Activated naive CD4-positive, alpha-beta T cell treated with anti-CD3 and anti-CD28 coated beads for 36 hours (primary cell): ENCODE measurements at regions of chr9 and their contacts with region 1.

Region 1: DNA sequence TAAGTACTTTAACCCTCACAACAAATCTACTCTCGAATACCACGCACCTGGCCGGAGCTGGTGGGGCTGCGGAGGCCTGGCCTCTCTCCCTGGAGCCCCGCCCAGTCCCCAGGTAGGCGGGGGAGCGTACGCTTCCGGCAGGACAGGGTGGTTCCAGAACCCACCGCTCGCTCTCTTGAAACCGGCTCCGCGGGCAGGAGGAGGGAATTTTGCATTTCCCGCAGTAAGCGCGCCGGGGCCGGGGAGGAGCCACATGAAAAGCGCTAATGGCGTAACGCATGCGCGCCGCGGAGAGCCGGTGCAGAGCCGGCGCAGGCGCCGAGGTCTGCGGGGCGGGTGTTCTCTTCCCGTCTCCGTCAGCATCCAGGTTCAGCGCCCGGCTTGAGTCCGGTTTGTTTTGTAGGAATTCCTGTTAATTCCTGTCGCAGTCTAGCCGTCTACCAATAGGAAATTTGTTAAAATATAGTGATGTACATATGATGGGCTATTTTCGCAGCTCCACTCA is 20.8 kb downstream of the CAVIN4 start:
- DNase-seq: peak; percentile 83
- H3K4me3 Mint-ChIP-seq: peak overlapping the region; percentile 72
- H3K27ac Mint-ChIP-seq: peak overlapping the region; percentile 58
- H3K4me1 Mint-ChIP-seq: peaks cover 15% of the 10 kb centered on the region
- H3K27me3 Mint-ChIP-seq: no peaks in the 10 kb centered on the region

Region 2: GRCh38 chr9:99184475-99185347 is 1414.0 kb before region 1 on chr9:
- CTCF ChIA-PET with region 1: no interaction called
- intact Hi-C with region 1: loop called (anchors 2 kb)
- DNase-seq: peak; percentile 87
- H3K4me3 Mint-ChIP-seq: no peak overlapping the region
- H3K27ac Mint-ChIP-seq: peak overlapping the region; percentile 64
- H3K4me1 Mint-ChIP-seq: peaks cover 34% of the 10 kb centered on the region
- H3K27me3 Mint-ChIP-seq: peaks cover 3% of the 10 kb centered on the region

Region 3: DNA sequence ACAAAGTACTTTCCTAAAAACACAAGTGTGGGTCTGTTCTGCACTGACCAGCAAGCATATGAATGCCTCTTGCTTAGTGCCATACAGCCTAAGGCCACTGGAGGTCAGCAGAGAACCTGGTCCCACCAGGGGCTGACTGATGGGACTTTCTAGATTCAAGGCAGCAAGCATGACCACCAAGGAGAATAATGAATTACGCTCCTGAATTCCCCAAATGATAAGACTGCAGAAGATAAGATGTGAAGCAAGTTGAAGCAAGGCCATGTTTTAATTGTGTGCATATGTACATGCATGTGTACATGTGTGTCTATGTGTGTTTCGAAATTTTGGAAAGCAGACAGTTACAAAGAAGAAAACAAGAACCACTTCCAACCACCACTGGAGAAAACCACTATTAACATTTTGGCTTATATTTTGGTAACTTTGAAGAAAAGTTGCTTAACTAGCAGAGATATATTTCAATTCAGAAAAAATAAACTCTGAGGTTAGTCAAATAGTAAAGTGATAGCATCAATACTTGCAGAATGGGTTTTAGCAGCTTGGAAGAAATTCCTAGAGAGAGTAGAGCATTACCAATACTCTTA is 570.4 kb before region 1 on chr9:
- CTCF ChIA-PET with region 1: no interaction called
- intact Hi-C with region 1: loop called (anchors 1 kb)
- DNase-seq: peak; percentile 84
- H3K4me3 Mint-ChIP-seq: no peak overlapping the region
- H3K27ac Mint-ChIP-seq: no peak overlapping the region
- H3K4me1 Mint-ChIP-seq: peaks cover 3% of the 10 kb centered on the region
- H3K27me3 Mint-ChIP-seq: no peaks in the 10 kb centered on the region

Region 4: DNA sequence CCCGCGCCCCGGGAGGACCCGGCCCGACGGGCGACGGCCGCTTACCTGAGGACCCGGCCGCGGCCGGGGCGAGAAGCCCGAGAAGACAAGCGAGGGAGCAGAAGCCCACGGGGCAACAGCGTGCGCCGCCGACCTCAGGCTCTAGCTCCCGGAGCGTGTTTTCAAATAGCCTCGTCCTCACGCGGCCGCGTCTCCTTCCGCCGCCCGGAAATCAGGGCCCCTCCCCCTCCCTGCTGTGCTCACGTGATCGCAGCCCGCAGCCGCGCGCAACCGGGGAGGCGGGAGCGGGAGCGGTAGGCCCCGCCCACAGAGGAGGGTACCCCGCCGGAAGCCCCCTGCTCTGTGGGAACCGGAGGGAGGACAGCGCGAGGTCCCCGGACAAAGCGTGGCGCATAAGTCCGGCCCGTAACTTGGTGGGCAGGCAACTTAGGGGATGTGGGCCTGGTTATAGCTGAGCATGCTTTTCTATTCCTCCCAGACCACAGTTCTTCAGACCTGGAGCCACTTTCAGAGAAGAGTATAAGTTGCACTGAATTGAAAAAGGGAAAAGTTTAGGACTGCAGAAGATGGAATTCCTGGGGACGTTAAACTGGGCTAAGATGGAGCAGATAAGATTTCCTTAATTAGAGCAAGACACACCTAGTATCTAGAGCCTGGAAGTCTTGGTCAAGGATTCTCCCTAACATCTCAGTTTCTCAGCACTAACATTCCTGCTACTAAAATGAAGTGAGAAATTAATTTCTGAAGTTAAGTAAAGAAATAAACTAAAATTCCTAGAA is 245.8 kb before region 1 on chr9 and contains the start of gene TEX10:
- CTCF ChIA-PET with region 1: interaction called, 7 read pairs
- intact Hi-C with region 1: loop called (anchors 2 kb)
- DNase-seq: peak; percentile 91
- H3K4me3 Mint-ChIP-seq: peak within 1 kb of the TSS; percentile 85
- H3K27ac Mint-ChIP-seq: peak within 1 kb of the TSS; percentile 74
- H3K4me1 Mint-ChIP-seq: peaks cover 33% of the 10 kb centered on the region
- H3K27me3 Mint-ChIP-seq: no peaks in the 10 kb centered on the region
- total RNA-seq, gene TEX10: 17.3 to 17.9 TPM

Region 5: GRCh38 chr9:100499866-100500265 is 98.8 kb before region 1 on chr9:
- CTCF ChIA-PET with region 1: interaction called, 7 read pairs
- intact Hi-C with region 1: loop called (anchors 1 kb)
- DNase-seq: no peak
- H3K4me3 Mint-ChIP-seq: no peak overlapping the region
- H3K27ac Mint-ChIP-seq: no peak overlapping the region
- H3K4me1 Mint-ChIP-seq: no peaks in the 10 kb centered on the region
- H3K27me3 Mint-ChIP-seq: peaks cover 5% of the 10 kb centered on the region

Region 6: DNA sequence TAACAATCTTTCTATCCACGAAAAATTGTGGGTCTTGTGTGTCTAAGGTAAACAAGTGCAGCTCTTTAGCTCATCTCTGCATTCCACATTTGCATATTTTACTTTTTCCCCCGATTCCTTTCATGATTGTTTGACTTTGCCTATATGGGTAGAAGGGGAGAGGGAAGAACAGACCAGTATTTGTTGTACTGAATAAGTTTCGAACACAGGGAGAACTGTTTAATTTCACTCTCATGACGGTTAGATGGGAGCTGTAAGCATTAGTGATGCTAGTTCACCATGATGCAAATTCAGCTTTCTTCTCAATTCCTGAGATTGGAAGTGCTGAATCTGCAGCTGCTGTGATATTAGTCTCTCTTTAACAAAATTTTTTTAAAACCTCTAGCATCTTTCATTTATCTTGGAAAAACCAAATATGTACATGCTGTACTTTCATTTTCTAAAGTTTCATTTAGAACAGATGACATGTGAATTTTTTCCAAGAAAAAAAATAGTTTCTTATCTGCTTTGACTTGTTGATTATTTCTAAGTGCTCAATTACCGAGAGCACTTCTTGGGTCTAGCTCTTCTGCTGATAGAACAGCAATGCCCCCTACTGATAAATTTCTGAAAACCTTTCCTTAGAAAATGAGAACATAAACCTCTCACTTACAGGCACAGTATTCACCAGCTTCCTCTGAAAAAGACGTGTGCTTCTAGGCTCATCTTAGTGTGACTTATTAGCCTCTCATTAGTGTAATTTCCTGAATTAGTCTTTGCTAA is 636.6 kb after region 1 on chr9:
- CTCF ChIA-PET with region 1: interaction called, 5 read pairs
- intact Hi-C with region 1: loop called (anchors 2 kb)
- DNase-seq: no peak
- H3K4me3 Mint-ChIP-seq: no peak overlapping the region
- H3K27ac Mint-ChIP-seq: no peak overlapping the region
- H3K4me1 Mint-ChIP-seq: no peaks in the 10 kb centered on the region
- H3K27me3 Mint-ChIP-seq: peaks cover 15% of the 10 kb centered on the region